ENCODE measurements at regions of chr19 and their contacts with region 1.

Region 1: DNA sequence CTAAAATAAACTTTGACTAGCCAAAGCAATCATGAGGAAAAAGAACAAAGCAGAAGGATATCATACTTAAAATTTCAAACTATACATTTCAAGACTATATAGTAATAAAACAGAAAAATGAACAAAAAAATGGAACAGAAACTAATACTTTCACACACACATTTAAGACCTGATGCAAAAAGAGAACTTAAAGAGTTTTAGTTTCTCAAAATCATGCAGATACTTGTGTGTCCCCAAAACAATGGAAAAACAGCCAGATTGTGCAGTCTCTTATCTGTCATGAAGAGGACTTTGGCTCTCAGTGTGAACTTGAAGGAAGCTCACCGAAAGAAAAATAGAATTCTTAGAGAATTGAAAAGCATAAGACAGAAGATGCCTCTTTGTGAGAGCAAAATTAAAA is 16.1 kb downstream of the ZNF506 start:
- DNase-seq: no peak
- ATAC-seq: no peak
- H3K4me3 Mint-ChIP-seq: no peak overlapping the region
- H3K27ac Mint-ChIP-seq: peak overlapping the region; percentile 50
- H3K4me1 Mint-ChIP-seq: peaks cover 50% of the 10 kb centered on the region
- H3K27me3 Mint-ChIP-seq: no peaks in the 10 kb centered on the region
- CTCF ChIP-seq: no peak

Region 2: GRCh38 chr19:19884583-19884982 is 79.1 kb after region 1 on chr19:
- CTCF ChIA-PET with region 1: no interaction called
- POLR2A ChIA-PET with region 1: interaction called, 10 read pairs
- intact Hi-C with region 1: no loop called
- DNase-seq: no peak
- ATAC-seq: no peak
- H3K4me3 Mint-ChIP-seq: no peak overlapping the region
- H3K27ac Mint-ChIP-seq: no peak overlapping the region
- H3K4me1 Mint-ChIP-seq: no peaks in the 10 kb centered on the region
- H3K27me3 Mint-ChIP-seq: no peaks in the 10 kb centered on the region
- CTCF ChIP-seq: no peak

Measured in activated B cell treated with CpG ODN at 0.5 μM for 24 hours (primary cell).